Mammary epithelial cell (primary cell): ENCODE measurements at regions of chr17 and their contacts with region 1.

Region 1: DNA sequence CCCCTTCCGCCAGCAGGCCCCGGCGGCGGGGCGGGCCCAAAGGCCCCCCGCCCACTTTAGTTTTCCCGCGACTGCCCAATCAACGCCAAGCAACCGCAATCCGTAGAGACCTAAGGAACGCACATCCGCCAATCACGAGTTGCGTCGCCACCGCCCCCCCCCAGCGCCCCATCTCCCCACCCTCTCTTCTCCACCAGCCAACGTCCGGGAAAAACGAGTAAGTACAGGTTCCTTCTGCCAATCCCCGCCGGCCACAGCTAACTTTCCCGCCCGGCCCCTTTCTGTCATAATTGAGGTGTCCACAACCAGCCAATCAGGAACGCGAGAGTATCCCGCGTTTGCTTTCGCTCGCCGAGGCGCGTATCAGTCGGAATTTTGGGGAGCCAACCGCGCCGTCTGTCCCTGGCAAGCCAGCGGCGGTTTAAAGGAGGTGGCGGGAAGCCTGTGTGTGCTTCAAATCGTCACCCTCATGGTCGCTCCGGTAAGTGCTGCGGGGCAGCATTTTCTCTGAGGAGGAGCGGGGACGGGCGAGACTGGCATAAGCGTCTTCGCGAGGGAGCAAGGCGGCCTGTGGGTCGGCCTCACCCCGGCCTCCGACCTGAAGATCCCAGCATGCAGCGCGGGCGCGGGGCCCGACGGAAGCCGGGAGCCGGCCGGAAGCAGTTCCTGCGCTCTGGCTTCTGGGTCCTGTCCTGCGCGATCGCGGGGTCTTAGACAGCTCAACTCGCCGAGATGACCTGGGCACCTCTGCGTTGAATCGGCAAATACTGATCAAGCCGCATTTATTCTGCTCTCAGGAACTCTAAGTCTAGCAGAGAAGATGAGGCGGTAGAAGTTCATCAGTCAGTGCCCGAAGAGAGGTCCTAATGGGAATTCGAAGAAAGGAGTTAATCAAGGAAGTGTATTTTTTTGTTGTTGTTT is at the start of gene MIS12:
- DNase-seq: peak; percentile 99
- H3K4me3 ChIP-seq: peak within 1 kb of the TSS; percentile 74 to 79 (median 79)
- H3K27ac ChIP-seq: peak within 1 kb of the TSS; percentile 94
- H3K4me1 ChIP-seq: peaks cover 8% of the 10 kb centered on the region
- H3K27me3 ChIP-seq: no peaks in the 10 kb centered on the region
- CTCF ChIP-seq: no peak
- total RNA-seq, gene MIS12: 9.7 to 17.5 TPM

Region 2: GRCh38 chr17:5468075-5468473 is 18.4 kb before region 1 on chr17:
- CTCF ChIA-PET with region 1: no interaction called
- dilution Hi-C with region 1: no loop called
- in situ Hi-C with region 1: no loop called
- intact Hi-C with region 1: loop called (anchors 1 kb)
- DNase-seq: peak; percentile 16
- H3K4me3 ChIP-seq: peak overlapping the region; percentile 87 to 92 (median 87)
- H3K27ac ChIP-seq: peak overlapping the region; percentile 54
- H3K4me1 ChIP-seq: peaks cover 10% of the 10 kb centered on the region
- H3K27me3 ChIP-seq: no peaks in the 10 kb centered on the region
- CTCF ChIP-seq: no peak